ENCODE measurements at regions of chr6 and their contacts with region 1.

Region 1: DNA sequence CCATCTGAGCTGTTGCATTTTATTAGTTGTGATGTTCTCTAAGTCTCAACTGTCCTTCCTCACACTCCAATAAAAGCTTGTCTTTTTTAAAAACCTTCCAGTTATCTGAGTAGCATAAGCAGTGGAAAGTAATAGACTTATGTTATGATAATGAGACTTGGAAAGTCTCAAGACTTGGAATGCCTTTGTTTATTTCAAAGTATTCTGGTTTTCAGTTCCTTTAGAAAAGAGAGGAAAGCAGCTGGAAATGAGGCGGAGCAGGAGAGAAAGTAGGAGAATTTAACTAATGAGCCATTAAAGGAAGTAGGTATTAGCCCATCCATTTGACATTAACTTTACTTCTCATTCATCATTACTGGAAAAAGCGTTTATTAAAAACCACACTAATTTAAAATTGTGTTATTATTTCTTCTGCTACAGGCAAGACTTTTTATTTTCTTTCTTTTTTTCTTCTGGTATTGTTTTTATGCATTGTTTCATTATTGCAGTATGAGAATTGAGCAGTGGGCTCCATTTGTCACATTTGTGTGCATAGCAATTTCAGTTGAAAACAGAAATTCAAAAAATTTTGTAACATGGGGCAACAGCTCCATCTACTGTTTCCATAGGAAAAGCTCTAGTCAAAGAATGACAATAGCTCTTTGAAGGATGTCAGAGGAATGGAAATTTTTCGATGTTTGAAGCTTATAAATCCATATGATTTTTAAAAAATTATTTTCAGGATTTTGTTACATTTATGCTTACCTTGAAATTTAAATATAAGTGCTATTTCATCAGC is 194.8 kb downstream of the COL9A1 start:
- DNase-seq: no peak
- ATAC-seq: no peak
- H3K4me3 Mint-ChIP-seq: no peak overlapping the region
- H3K27ac Mint-ChIP-seq: no peak overlapping the region
- H3K4me1 Mint-ChIP-seq: peaks cover 8% of the 10 kb centered on the region
- H3K27me3 Mint-ChIP-seq: no peaks in the 10 kb centered on the region
- CTCF ChIP-seq: peak; percentile 80

Region 2: GRCh38 chr6:68634726-68635411 is 1473.2 kb before region 1 on chr6 and contains the start of gene ADGRB3:
- CTCF ChIA-PET with region 1: interaction called, 3 read pairs
- POLR2A ChIA-PET with region 1: no interaction called
- intact Hi-C with region 1: loop called (anchors 1 kb)
- DNase-seq: no peak
- ATAC-seq: peak; percentile 54
- H3K4me3 Mint-ChIP-seq: peak within 1 kb of the TSS; percentile 83
- H3K27ac Mint-ChIP-seq: no peak within 1 kb of the TSS
- H3K4me1 Mint-ChIP-seq: peaks cover 21% of the 10 kb centered on the region
- H3K27me3 Mint-ChIP-seq: peaks cover 38% of the 10 kb centered on the region
- CTCF ChIP-seq: no peak
- total RNA-seq, gene ADGRB3: not detected in 2 replicates